ENCODE measurements at regions of chr15 and their contacts with region 1.

Region 1: GRCh38 chr15:40323239-40323952 is at the start of gene INAFM2:
- DNase-seq: peak; percentile 77
- H3K4me3 Mint-ChIP-seq: peak within 1 kb of the TSS; percentile 73
- H3K27ac Mint-ChIP-seq: no peak within 1 kb of the TSS
- H3K4me1 Mint-ChIP-seq: peaks cover 22% of the 10 kb centered on the region
- H3K27me3 Mint-ChIP-seq: no peaks in the 10 kb centered on the region
- total RNA-seq, gene INAFM2: 4.9 to 6.5 TPM

Region 2: DNA sequence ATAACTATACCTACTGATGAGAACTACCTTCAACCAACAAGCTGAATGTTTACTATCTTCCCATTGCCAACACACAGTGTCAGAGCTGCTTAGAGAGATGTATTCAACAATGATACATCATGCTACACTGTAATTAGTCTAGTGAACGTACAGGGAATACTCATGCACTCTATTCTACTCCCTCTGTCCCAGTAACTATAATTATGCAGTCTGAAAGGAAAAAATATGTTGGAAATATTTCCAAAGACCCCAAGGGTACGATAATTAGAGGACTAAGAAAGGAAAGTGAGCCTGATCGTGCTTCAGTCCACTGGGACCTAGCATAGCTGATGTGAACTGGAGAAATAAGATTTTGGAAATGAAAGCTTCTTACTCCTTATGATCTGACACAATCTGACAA is 503.9 kb before region 1 on chr15:
- CTCF ChIA-PET with region 1: no interaction called
- intact Hi-C with region 1: no loop called
- DNase-seq: no peak
- H3K4me3 Mint-ChIP-seq: no peak overlapping the region
- H3K27ac Mint-ChIP-seq: no peak overlapping the region
- H3K4me1 Mint-ChIP-seq: no peaks in the 10 kb centered on the region
- H3K27me3 Mint-ChIP-seq: no peaks in the 10 kb centered on the region

Region 3: GRCh38 chr15:40044717-40045571 is 278.5 kb before region 1 on chr15:
- CTCF ChIA-PET with region 1: interaction called, 3 read pairs
- intact Hi-C with region 1: loop called (anchors 5 kb)
- DNase-seq: peak; percentile 96
- H3K4me3 Mint-ChIP-seq: peak overlapping the region; percentile 45
- H3K27ac Mint-ChIP-seq: peak overlapping the region; percentile 50
- H3K4me1 Mint-ChIP-seq: peaks cover 70% of the 10 kb centered on the region
- H3K27me3 Mint-ChIP-seq: no peaks in the 10 kb centered on the region

Region 4: DNA sequence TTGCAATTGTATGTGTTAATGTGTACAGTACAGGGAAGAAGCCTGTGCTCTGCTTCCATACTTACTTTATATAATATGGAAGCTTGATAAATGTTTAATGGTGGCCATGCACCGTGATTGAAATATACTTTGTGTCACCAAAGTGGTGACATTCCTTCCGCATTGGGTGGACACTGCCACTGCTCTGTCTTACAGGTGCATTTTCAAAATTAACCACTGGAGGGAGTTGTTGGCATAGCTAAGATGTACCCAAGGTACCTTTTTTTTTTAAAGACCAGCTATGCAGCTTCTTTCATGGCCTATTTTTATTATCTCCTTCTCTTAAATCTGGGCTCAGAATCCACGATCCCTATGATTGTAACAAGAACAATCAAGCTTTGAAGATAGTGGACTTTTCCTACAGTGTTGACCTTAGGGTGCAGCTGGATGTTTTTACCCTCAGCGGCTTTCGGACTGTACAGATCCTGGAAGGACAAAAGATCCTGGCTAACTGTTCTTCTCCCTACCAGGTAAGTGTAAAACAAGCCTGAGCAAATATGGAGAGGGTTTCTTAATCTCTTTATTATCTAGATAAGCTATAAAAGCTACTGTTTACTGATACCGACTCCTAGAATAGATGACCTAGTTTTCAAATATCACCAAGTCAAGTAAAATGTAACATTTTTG is 106.1 kb before region 1 on chr15:
- CTCF ChIA-PET with region 1: no interaction called
- intact Hi-C with region 1: loop called (anchors 5 kb)
- DNase-seq: peak; percentile 47
- H3K4me3 Mint-ChIP-seq: no peak overlapping the region
- H3K27ac Mint-ChIP-seq: no peak overlapping the region
- H3K4me1 Mint-ChIP-seq: no peaks in the 10 kb centered on the region
- H3K27me3 Mint-ChIP-seq: no peaks in the 10 kb centered on the region

Region 5: GRCh38 chr15:40338041-40338657 is 14.8 kb after region 1 on chr15:
- CTCF ChIA-PET with region 1: interaction called, 448 read pairs
- intact Hi-C with region 1: loop called (anchors 1 kb)
- DNase-seq: peak; percentile 82
- H3K4me3 Mint-ChIP-seq: no peak overlapping the region
- H3K27ac Mint-ChIP-seq: no peak overlapping the region
- H3K4me1 Mint-ChIP-seq: peaks cover 17% of the 10 kb centered on the region
- H3K27me3 Mint-ChIP-seq: no peaks in the 10 kb centered on the region

Region 6: GRCh38 chr15:40367686-40368611 is 44.6 kb after region 1 on chr15:
- CTCF ChIA-PET with region 1: interaction called, 5 read pairs
- intact Hi-C with region 1: loop called (anchors 2 kb)
- DNase-seq: peak; percentile 91
- H3K4me3 Mint-ChIP-seq: peak overlapping the region; percentile 75
- H3K27ac Mint-ChIP-seq: no peak overlapping the region
- H3K4me1 Mint-ChIP-seq: peaks cover 11% of the 10 kb centered on the region
- H3K27me3 Mint-ChIP-seq: no peaks in the 10 kb centered on the region

Measured in activated naive CD4-positive, alpha-beta T cell treated with anti-CD3 and anti-CD28 coated beads for 36 hours (primary cell).